CD14-positive monocyte (primary cell): ENCODE measurements at regions of chr6 and their contacts with region 1.

Region 1: GRCh38 chr6:107674995-107675738 is 148.9 kb downstream of the SCML4 start:
- DNase-seq: peak; percentile 52 to 78 (median 63)
- H3K4me3 ChIP-seq: no peak overlapping the region
- H3K4me3 Mint-ChIP-seq: peak overlapping the region; percentile 16 to 40
- H3K27ac ChIP-seq: no peak overlapping the region
- H3K27ac Mint-ChIP-seq: peak overlapping the region in 3 of 7 donors; percentile 27 to 65 (median 33)
- H3K4me1 ChIP-seq: peaks cover 16 to 20% of the 10 kb centered on the region in 2 donors
- H3K4me1 Mint-ChIP-seq: peaks cover 22% of the 10 kb centered on the region
- H3K27me3 ChIP-seq: peaks cover 3 to 13% of the 10 kb centered on the region in 2 donors
- H3K27me3 Mint-ChIP-seq: peaks cover 12 to 35% (median 13%) of the 10 kb centered on the region in 3 donors
- CTCF ChIP-seq: peak; percentile 86

Region 2: GRCh38 chr6:107110200-107110599 is 565.0 kb before region 1 on chr6:
- intact Hi-C with region 1: no loop called
- DNase-seq: peak in 2 of 3 donors; percentile 60 to 76
- H3K4me3 ChIP-seq: peak overlapping the region in 1 of 3 experiments; percentile 12
- H3K4me3 Mint-ChIP-seq: no peak overlapping the region
- H3K27ac ChIP-seq: no peak overlapping the region
- H3K27ac Mint-ChIP-seq: peak overlapping the region in 3 of 7 donors; percentile 56 to 79 (median 75)
- H3K4me1 ChIP-seq: peaks cover 36 to 38% of the 10 kb centered on the region in 2 donors
- H3K4me1 Mint-ChIP-seq: peaks cover 36% of the 10 kb centered on the region
- H3K27me3 ChIP-seq: no peaks in the 10 kb centered on the region
- H3K27me3 Mint-ChIP-seq: peaks cover 2 to 6% (median 5%) of the 10 kb centered on the region in 3 donors
- CTCF ChIP-seq: no peak

Region 3: DNA sequence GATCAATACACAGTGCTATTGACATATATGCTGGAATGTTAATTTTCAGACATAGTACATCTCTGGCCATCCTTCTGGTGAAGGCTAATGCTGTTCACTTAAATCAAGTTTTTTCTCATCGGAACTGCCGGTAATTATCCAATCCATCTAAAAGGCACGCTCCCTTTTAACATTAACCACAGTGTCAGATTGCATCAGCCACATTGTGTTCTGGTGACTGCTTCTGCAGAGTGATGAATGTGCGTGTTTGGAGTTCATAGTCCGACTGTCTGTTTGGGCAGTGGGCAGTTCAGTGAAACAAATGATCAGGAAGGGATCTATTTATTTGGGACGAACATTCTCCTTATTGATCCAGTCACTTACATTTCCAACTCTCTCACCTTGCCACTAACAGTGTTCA is 135.8 kb before region 1 on chr6:
- intact Hi-C with region 1: no loop called
- DNase-seq: no peak
- H3K4me3 ChIP-seq: no peak overlapping the region
- H3K4me3 Mint-ChIP-seq: no peak overlapping the region
- H3K27ac ChIP-seq: no peak overlapping the region
- H3K27ac Mint-ChIP-seq: no peak overlapping the region
- H3K4me1 ChIP-seq: no peaks in the 10 kb centered on the region
- H3K4me1 Mint-ChIP-seq: no peaks in the 10 kb centered on the region
- H3K27me3 ChIP-seq: peaks cover 5% of the 10 kb centered on the region in 2 donors
- H3K27me3 Mint-ChIP-seq: peaks cover 7 to 24% (median 7%) of the 10 kb centered on the region in 3 donors
- CTCF ChIP-seq: no peak

Region 4: GRCh38 chr6:107847844-107848802 is 173.0 kb after region 1 on chr6:
- intact Hi-C with region 1: loop called (anchors 2 to 5 kb)
- DNase-seq: peak; percentile 61 to 77 (median 71)
- H3K4me3 ChIP-seq: peak overlapping the region; percentile 17 to 70 (median 24)
- H3K4me3 Mint-ChIP-seq: peak overlapping the region; percentile 72 to 87
- H3K27ac ChIP-seq: no peak overlapping the region
- H3K27ac Mint-ChIP-seq: peak overlapping the region in 1 of 7 donors; percentile 6
- H3K4me1 ChIP-seq: peaks cover 10 to 12% of the 10 kb centered on the region in 2 donors
- H3K4me1 Mint-ChIP-seq: peaks cover 13% of the 10 kb centered on the region
- H3K27me3 ChIP-seq: peaks cover 8 to 15% of the 10 kb centered on the region in 2 donors
- H3K27me3 Mint-ChIP-seq: peaks cover 21 to 40% (median 23%) of the 10 kb centered on the region in 3 donors
- CTCF ChIP-seq: peak; percentile 98

Region 5: DNA sequence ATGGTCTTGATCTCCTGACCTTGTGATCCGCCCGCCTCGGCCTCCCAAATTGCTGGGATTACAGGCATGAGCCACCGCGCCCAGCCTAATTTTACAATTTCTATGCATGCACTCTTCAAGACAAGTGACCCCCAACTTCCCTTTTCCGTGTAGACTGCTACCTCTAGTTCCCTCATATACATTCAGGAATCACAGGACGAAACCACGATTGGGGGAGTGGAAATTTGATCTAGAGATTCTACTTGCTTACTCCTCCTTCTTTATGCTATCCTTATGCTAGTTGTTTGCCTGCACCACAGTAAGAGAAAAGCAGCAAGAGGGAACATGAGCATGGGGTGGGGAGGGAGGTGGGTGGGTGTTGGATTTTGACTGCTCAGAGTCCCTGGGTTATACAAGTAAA is 364.5 kb after region 1 on chr6:
- intact Hi-C with region 1: loop called in 1 of 2 experiments (anchors 10 kb)
- DNase-seq: no peak
- H3K4me3 ChIP-seq: no peak overlapping the region
- H3K4me3 Mint-ChIP-seq: no peak overlapping the region
- H3K27ac ChIP-seq: no peak overlapping the region
- H3K27ac Mint-ChIP-seq: peak overlapping the region in 2 of 7 donors; percentile 12 to 73
- H3K4me1 ChIP-seq: no peaks in the 10 kb centered on the region
- H3K4me1 Mint-ChIP-seq: no peaks in the 10 kb centered on the region
- H3K27me3 ChIP-seq: no peaks in the 10 kb centered on the region
- H3K27me3 Mint-ChIP-seq: peaks cover 0 to 1% (median 0%) of the 10 kb centered on the region in 3 donors
- CTCF ChIP-seq: no peak